ENCODE measurements at regions of chr12 and their contacts with region 1.

Region 1: DNA sequence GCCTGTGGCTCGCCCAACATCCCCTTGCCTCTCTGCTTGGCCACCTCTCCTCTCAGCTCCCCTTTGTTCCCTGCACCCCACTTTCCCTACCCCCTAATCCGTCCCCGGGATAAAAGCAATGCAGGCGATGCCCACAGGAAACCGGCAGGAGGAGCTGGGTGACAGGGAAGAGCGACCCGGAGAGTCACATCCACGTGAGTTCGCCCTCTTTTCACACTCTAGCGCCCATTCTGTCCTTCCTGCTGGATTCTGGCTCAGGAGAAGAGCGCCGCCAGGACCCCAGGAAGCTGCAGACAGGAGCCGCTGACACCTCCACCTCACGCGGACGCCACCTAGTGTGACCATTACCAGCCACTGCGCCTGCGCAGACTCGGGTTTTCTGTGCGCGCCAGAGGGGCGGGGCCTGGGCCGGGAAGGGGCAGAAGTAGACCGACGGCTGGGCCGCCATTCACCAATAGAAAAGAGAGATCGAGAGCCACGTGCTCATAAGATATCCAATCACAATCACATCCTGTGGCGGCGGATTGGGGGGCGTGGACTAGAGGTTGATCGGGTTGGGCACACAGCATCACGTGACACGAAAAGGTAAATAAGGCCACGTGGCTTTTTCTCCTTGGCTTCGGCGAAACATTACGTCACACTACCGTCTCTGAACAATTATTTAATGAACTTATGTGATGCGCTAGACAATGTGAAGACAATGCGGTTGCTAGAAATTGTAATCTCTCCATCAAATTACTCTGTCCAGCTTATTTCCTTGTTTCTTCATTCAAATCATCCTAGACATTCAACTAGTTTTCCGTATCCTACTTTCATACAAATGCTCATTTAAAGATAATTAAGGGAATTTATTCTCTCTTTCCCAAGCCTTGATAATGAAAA is 10.1 kb downstream of the PLA2G1B start:
- DNase-seq: peak; percentile 98 to 100 (median 99)
- H3K4me3 ChIP-seq: peak overlapping the region; percentile 55 to 85 (median 73)
- H3K27ac ChIP-seq: peak overlapping the region in 58 of 59 donors; percentile 44 to 96 (median 87)
- H3K27me3 ChIP-seq: no peaks in the 10 kb centered on the region
- CTCF ChIP-seq: peak; percentile 21 to 84 (median 68)

Region 2: GRCh38 chr12:120301962-120302815 is 15.3 kb before region 1 on chr12 and contains the start of gene SIRT4:
- intact Hi-C with region 1: loop called (anchors 1 to 2 kb)
- DNase-seq: peak; percentile 72 to 97 (median 92)
- H3K4me3 ChIP-seq: peak within 1 kb of the TSS; percentile 42 to 93 (median 77)
- H3K27ac ChIP-seq: peak within 1 kb of the TSS in 55 of 59 donors; percentile 18 to 95 (median 83)
- H3K27me3 ChIP-seq: no peaks in the 10 kb centered on the region
- CTCF ChIP-seq: peak; percentile 86 to 99 (median 93)
- total RNA-seq, gene SIRT4: 1.9 to 15.5 (median 6.3) TPM

Region 3: GRCh38 chr12:120437754-120438494 is 120.5 kb after region 1 on chr12 and contains the start of gene COX6A1:
- intact Hi-C with region 1: loop called in 1 of 2 experiments (anchors 10 kb)
- DNase-seq: peak; percentile 87 to 97 (median 96)
- H3K4me3 ChIP-seq: peak within 1 kb of the TSS; percentile 64 to 98 (median 88)
- H3K27ac ChIP-seq: peak within 1 kb of the TSS; percentile 40 to 93 (median 85)
- H3K27me3 ChIP-seq: no peaks in the 10 kb centered on the region
- CTCF ChIP-seq: peak in 42 of 56 donors; percentile 10 to 67 (median 41)
- total RNA-seq, gene COX6A1: 341 to 794 (median 594) TPM

Region 4: GRCh38 chr12:120528861-120529525 is 211.5 kb after region 1 on chr12 and contains the start of gene COQ5:
- intact Hi-C with region 1: loop called in 1 of 2 experiments (anchors 10 kb)
- DNase-seq: peak; percentile 89 to 97 (median 94)
- H3K4me3 ChIP-seq: peak within 1 kb of the TSS; percentile 61 to 99 (median 87)
- H3K27ac ChIP-seq: peak within 1 kb of the TSS; percentile 77 to 99 (median 93)
- H3K27me3 ChIP-seq: no peaks in the 10 kb centered on the region
- CTCF ChIP-seq: peak in 25 of 56 donors; percentile 3 to 52 (median 25)
- total RNA-seq, gene COQ5: 14.4 to 30.4 (median 22.9) TPM

Region 5: GRCh38 chr12:120554678-120555077 is 237.2 kb after region 1 on chr12:
- intact Hi-C with region 1: no loop called
- DNase-seq: no peak
- H3K4me3 ChIP-seq: no peak overlapping the region
- H3K27ac ChIP-seq: peak overlapping the region in 41 of 59 donors; percentile 4 to 75 (median 48)
- H3K27me3 ChIP-seq: no peaks in the 10 kb centered on the region
- CTCF ChIP-seq: no peak

Region 6: GRCh38 chr12:120640840-120641833 is 323.7 kb after region 1 on chr12:
- intact Hi-C with region 1: loop called in 1 of 2 experiments (anchors 10 kb)
- DNase-seq: peak in 1 of 10 donors; percentile 26
- H3K4me3 ChIP-seq: peak overlapping the region; percentile 45 to 76 (median 64)
- H3K27ac ChIP-seq: peak overlapping the region in 55 of 59 donors; percentile 23 to 95 (median 82)
- H3K27me3 ChIP-seq: peaks cover 0 to 37% (median 7%) of the 10 kb centered on the region in 45 donors
- CTCF ChIP-seq: no peak

Measured in dorsolateral prefrontal cortex (tissue), 120 donors.